Calu3 (cell line): ENCODE measurements at regions of chr20 and their contacts with region 1.

Region 1: GRCh38 chr20:22795871-22796270 is 211.5 kb upstream of the FOXA2 start:
- DNase-seq: peak; percentile 1
- H3K4me3 Mint-ChIP-seq: no peak overlapping the region
- H3K27ac Mint-ChIP-seq: peak overlapping the region; percentile 10
- H3K4me1 Mint-ChIP-seq: peaks cover 32% of the 10 kb centered on the region
- H3K27me3 Mint-ChIP-seq: no peaks in the 10 kb centered on the region
- CTCF ChIP-seq: no peak

Region 2: GRCh38 chr20:22716821-22717351 is 79.0 kb before region 1 on chr20:
- CTCF ChIA-PET with region 1: no interaction called
- intact Hi-C with region 1: loop called (anchors 10 kb)
- DNase-seq: peak; percentile 10
- H3K4me3 Mint-ChIP-seq: no peak overlapping the region
- H3K27ac Mint-ChIP-seq: peak overlapping the region; percentile 39
- H3K4me1 Mint-ChIP-seq: peaks cover 18% of the 10 kb centered on the region
- H3K27me3 Mint-ChIP-seq: no peaks in the 10 kb centered on the region
- CTCF ChIP-seq: no peak

Region 3: DNA sequence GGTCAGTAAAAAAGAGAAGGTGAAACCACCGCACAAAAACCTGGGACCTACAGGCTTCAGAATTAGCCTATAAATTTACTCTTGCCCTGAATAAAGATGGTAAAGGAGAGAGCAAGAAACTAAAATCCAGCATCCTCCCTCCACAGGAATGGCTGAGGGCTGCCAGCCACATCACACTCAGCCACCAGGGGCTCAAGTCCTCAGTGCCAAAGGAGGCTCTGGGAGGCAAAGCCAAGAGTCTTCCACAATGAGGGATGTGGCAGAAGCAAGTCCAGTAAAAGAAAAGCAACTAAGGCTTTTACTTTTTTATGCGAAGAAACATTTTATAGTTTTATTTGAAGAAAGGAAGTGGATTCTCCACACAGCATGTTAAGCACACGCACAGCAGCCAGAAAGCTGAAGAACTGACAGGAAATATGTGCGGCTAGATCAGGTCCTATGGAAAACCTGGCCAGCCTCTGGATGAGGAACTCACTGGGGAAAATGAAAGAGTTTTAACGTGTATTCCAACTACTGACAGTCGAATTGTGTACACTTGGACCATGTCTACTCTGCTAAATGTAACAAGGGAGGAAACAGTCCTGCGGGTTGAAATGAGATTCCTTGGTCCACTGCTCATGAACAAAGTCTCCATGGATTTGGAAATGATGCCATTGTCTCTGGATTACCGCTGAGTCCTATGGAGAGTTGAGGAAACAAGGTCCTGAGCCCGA is 19.9 kb after region 1 on chr20:
- CTCF ChIA-PET with region 1: no interaction called
- intact Hi-C with region 1: no loop called
- DNase-seq: no peak
- H3K4me3 Mint-ChIP-seq: no peak overlapping the region
- H3K27ac Mint-ChIP-seq: no peak overlapping the region
- H3K4me1 Mint-ChIP-seq: no peaks in the 10 kb centered on the region
- H3K27me3 Mint-ChIP-seq: no peaks in the 10 kb centered on the region
- CTCF ChIP-seq: no peak